PC-3 (cell line): ENCODE measurements at regions of chr20 and their contacts with region 1.

Region 1: GRCh38 chr20:50308513-50309279 is 118.1 kb downstream of the CEBPB start:
- DNase-seq: peak; percentile 96
- ATAC-seq: peak; percentile 69
- H3K4me3 ChIP-seq: peak overlapping the region; percentile 29
- H3K27ac ChIP-seq: peak overlapping the region; percentile 89
- H3K4me1 ChIP-seq: peaks cover 57% of the 10 kb centered on the region
- H3K27me3 ChIP-seq: no peaks in the 10 kb centered on the region
- CTCF ChIP-seq: no peak; the same call in 1 of the 2 replicates

Region 2: DNA sequence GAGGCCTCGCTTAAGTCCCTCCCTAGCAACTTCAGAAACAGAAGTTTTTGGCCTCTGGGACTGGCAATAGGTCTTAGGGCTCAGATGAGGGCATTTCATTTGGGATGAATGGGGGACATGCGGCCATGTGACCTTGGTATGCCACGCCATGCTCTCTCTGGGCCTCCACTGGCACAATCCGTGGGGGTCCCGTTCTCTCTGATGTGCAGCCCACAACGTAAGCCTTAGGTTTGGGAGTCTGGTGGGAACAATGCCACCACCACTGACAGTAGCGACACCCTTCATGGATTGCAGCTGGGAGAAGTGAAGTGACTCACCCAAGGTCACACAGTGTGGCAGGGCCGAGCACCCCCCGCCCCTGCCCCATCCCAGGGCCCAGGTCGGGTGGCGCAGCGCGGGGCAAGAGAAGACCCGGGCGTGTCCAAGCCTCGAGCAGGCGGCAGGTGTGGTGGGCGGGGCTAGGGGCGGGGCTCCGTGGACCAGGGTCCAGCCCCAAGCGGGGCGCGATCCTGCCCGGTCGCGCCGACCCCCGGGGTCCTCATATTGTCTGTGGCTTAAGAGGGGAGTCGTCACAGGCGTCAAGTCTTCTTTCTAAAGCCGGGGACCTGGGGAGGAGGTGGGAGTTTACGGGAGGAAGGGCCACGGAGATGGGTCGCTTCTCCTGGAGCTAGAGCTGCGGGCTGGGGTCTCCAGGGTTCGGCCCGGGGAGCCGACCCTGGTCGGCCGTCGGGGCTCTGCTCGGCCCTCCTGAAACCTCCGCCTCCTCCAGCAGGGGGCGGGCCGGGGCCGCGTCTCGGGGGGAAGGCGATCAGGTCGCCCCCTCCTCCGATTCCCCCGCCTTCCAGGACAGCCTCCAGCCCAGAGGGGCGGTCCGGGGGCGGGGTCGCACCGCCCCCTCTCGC is 118.8 kb before region 1 on chr20:
- CTCF ChIA-PET with region 1: no interaction called
- POLR2A ChIA-PET with region 1: no interaction called
- intact Hi-C with region 1: loop called (anchors 5 kb)
- DNase-seq: peak; percentile 92
- ATAC-seq: peak; percentile 39
- H3K4me3 ChIP-seq: peak overlapping the region; percentile 96
- H3K27ac ChIP-seq: peak overlapping the region; percentile 75; the same call in 1 of the 2 replicates
- H3K4me1 ChIP-seq: peaks cover 28% of the 10 kb centered on the region
- H3K27me3 ChIP-seq: no peaks in the 10 kb centered on the region
- CTCF ChIP-seq: peak; percentile 72

Region 3: DNA sequence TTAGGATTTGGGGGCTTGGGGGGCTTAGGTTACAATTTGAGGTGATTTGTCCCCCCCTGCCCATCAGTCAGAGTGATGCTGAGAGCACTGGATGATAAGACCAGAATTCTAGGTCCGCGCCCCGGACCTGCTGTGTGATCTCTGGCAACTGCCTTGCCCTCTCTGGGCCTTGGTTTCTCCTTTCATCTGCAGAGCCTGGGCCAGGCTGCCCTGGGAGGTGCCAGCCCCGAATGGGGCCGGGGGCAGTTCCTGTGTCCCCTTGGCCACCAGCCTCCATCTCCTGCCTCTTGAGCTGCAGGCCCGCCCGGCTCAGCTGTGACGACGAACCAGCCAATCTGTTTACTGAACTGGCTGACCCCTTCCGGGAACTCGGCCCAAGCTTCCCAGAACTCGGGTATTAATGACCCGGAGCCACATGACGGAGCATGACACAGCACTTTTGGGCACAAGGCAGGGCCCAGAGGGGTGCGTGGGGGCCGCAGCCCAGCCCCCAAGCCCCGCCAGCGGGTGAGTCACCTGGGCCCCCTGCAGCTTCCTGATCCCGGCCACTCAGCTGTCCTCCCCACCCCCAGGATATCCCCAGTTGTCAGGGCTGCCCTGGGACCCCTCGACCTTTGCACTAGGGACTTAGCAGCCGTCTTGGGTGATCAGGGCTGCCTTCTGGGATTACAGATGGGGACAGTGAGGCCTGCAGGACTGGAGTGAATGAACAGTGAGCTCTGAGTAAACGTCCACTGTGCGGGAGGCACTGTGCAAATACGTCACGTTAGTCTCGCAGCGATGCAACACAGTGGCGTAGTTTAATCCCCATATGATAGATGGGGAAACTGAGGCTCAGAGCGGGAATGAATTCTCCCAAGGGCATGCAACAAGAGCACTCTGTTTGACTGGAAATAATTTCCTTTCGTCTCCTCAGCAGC is 16.1 kb before region 1 on chr20:
- CTCF ChIA-PET with region 1: no interaction called
- POLR2A ChIA-PET with region 1: no interaction called
- intact Hi-C with region 1: no loop called
- DNase-seq: peak; percentile 72
- ATAC-seq: peak; percentile 52
- H3K4me3 ChIP-seq: no peak overlapping the region
- H3K27ac ChIP-seq: peak overlapping the region; percentile 71
- H3K4me1 ChIP-seq: peaks cover 19% of the 10 kb centered on the region
- H3K27me3 ChIP-seq: no peaks in the 10 kb centered on the region
- CTCF ChIP-seq: no peak